Uterus (tissue), 4 donors: ENCODE measurements at regions of chr5 and their contacts with region 1.

Region 1: DNA sequence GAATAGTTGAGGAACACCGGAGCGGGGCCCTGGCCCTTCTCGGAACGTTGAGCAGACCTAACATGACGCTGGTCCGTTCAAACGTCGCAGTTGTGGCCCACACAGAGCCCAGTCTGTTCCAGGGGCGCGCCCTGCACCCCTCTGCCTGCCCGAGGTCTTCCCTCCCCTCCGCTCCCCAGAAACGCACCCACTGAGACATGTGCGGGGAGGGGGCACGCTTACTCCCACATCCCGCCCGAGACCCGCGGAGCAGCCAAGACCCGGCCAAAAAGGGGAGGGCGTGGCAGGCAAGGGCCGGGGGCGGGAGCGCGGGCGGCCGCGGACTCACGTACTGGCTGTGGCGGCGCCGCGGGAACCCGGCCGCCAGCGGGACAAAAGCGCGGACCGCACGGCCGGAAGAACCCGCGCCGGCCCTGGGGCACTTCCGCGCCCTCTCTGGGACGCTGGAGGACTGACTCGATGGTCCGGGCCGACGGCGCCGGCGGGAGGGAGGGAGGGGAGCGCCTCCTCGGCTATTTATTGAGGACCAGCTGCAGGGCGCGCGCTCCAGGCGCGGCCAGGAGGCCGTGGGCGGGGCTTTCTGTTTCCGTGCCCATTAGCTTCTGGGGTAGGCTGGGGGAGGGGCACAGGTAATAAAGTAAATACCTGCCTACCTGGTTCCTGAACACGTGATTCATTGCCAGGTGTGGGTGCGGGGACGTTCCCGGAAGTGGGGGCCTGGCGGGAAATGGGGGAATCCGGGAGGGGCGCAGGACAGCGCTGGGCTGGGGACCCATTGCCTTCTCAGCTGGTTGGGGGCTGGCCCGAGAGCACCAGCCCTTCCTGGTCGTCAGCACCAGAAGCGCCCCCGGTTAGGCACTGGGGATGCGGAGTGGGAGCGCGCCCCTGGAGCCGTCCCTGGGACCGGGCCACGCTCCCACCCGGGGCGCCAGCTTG is at the start of gene ZFP62:
- DNase-seq: peak; percentile 82 to 95
- H3K4me3 ChIP-seq: peak within 1 kb of the TSS; percentile 85 to 97
- H3K27ac ChIP-seq: peak within 1 kb of the TSS; percentile 83 to 91
- H3K4me1 ChIP-seq: no peaks in the 10 kb centered on the region
- H3K27me3 ChIP-seq: no peaks in the 10 kb centered on the region
- CTCF ChIP-seq: peak in 2 of 4 experiments; percentile 41 to 50
- POLR2A ChIP-seq: peak; percentile 46 to 60
- total RNA-seq, gene ZFP62: 8.5 to 43.6 (median 34.6) TPM

Region 2: DNA sequence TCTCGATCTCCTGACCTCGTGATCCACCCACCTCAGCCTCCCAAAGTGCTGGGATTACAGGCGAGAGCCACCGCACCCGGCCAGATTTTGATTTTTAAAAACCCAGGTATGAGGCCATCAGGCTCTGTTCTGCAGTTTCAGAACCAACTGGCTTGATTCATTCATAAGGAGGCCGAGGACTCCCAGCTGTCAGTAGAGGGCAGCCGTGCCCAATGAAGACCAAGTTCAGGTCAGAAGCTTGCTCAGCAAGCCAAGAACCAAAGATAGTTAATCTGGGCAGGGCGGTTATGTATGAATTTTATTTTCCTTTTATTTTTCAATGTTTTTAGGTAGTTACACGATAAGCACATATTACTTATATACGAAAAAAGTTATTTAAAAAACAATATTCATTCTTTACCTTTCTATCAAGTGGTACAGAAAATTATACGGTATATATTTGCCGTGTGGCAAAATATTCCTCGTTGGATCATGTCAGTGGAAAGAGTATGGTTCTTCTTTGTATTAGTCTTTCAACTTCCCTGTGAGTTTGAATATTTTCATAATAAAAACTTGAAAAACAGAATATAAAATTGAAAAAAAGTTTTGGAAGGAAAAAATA is 76.6 kb before region 1 on chr5:
- intact Hi-C with region 1: loop called (anchors 10 kb)
- DNase-seq: peak; percentile 82 to 84
- H3K4me3 ChIP-seq: no peak overlapping the region
- H3K27ac ChIP-seq: peak overlapping the region; percentile 76 to 81
- H3K4me1 ChIP-seq: peaks cover 7 to 12% of the 10 kb centered on the region in 2 donors
- H3K27me3 ChIP-seq: no peaks in the 10 kb centered on the region
- CTCF ChIP-seq: peak; percentile 67 to 77 (median 75)
- POLR2A ChIP-seq: no peak